ENCODE measurements at regions of chr14 and their contacts with region 1.

Region 1: GRCh38 chr14:92704036-92704804 is 44.2 kb downstream of the LGMN start:
- DNase-seq: peak; percentile 57
- ATAC-seq: peak; percentile 98
- H3K4me3 Mint-ChIP-seq: peak overlapping the region; percentile 51
- H3K27ac Mint-ChIP-seq: peak overlapping the region; percentile 90
- H3K4me1 Mint-ChIP-seq: peaks cover 60% of the 10 kb centered on the region
- H3K27me3 Mint-ChIP-seq: no peaks in the 10 kb centered on the region
- CTCF ChIP-seq: no peak

Region 2: GRCh38 chr14:92686900-92687444 is 17.2 kb before region 1 on chr14:
- CTCF ChIA-PET with region 1: interaction called, 6 read pairs
- POLR2A ChIA-PET with region 1: interaction called, 7 read pairs
- intact Hi-C with region 1: loop called (anchors 1 kb)
- DNase-seq: peak; percentile 83
- ATAC-seq: peak; percentile 90
- H3K4me3 Mint-ChIP-seq: no peak overlapping the region
- H3K27ac Mint-ChIP-seq: no peak overlapping the region
- H3K4me1 Mint-ChIP-seq: no peaks in the 10 kb centered on the region
- H3K27me3 Mint-ChIP-seq: no peaks in the 10 kb centered on the region
- CTCF ChIP-seq: peak; percentile 89

Region 3: DNA sequence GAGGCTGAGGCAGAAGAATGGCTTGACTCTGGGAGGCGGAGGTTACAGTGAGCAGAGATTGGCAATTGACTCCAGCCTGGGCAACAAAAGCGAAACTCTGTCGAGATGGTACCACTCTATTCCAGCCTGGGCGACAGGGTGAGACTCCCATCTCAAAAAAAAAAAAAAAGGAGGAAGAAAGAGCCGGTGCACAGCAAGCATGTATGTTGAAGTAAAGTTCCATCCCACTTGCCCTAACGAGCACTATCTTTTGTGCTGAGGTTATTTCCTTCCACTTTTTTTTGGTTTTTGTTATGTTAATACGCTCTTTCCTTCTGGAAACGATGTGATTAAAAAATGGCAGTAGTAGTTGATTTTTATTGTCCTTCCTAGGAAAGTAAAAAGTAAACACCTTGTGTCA is 70.4 kb after region 1 on chr14:
- CTCF ChIA-PET with region 1: no interaction called
- POLR2A ChIA-PET with region 1: no interaction called
- intact Hi-C with region 1: loop called (anchors 2 kb)
- DNase-seq: no peak
- ATAC-seq: no peak
- H3K4me3 Mint-ChIP-seq: peak overlapping the region; percentile 4
- H3K27ac Mint-ChIP-seq: peak overlapping the region; percentile 83
- H3K4me1 Mint-ChIP-seq: peaks cover 67% of the 10 kb centered on the region
- H3K27me3 Mint-ChIP-seq: no peaks in the 10 kb centered on the region
- CTCF ChIP-seq: no peak

Region 4: DNA sequence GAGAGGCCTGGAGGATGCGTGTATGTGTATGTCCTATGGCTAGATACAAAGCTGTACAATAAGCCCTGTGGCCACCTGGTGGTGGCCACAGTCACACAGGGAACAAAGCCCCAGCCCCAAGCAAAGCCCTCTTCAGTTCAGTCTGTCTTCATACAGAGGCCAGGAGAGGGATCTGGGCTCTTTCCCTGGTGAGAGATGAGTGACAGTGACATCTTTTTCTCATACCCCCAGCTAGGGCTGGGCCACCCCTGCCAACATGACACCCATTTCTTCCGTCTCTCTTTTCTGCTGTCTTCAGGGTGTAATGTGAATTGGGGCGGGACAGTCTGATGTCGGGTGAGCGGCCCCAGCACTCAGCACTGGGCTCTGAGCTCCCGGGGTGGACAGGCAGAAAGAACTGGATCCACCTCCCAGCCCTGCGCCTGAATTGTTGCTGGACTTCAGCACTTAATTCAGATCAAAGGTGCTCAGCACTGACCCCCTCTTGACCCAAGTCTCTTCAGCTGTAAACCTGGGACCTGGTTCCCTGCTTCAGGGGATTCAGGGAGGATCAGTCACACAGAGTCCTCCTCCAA is 1967.7 kb after region 1 on chr14:
- CTCF ChIA-PET with region 1: no interaction called
- POLR2A ChIA-PET with region 1: no interaction called
- intact Hi-C with region 1: no loop called
- DNase-seq: no peak
- ATAC-seq: no peak
- H3K4me3 Mint-ChIP-seq: no peak overlapping the region
- H3K27ac Mint-ChIP-seq: no peak overlapping the region
- H3K4me1 Mint-ChIP-seq: no peaks in the 10 kb centered on the region
- H3K27me3 Mint-ChIP-seq: peaks cover 5% of the 10 kb centered on the region
- CTCF ChIP-seq: no peak